GM10248 (cell line): ENCODE measurements at regions of chr3 and their contacts with region 1.

Region 1: DNA sequence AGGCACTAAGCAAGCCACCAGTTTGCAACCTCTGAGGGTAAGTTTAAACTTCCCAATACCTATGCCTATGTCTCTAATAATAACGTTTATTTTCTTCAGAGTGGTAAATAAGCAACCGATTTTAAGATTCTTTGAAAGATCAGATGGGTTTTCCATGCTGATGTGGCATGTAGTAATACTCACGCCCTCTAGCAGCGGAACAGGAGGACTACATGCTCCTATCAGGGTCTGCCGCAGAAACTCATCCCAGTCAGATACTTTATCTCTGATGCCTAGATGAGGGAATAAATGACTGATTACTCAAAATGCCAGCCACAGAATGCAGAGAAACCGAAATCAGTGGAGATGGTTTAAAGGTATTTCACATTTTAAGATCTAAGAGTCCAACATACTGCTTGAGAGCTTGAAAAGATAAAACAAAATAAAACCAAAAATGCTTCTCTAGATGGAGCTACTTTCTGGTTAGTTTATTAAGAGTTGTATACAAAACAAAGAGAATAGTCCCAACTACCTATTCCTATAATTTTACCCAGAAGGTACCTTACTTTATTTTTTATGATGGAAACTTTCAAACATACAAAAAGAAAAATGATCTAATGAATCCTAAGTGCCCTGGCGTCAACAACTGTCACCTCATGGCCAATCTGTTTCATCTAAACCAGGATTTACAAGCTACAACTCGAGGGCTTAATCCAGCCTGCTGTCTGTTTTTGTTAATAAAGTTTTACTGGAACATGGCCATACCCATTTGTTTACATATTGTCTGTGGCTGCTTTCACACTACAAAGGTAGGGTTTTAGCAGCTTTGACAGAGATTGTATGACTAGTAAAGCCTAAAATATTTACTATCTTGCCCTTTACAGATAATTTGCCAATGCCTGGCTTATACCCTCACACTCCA is 37.5 kb upstream of the STIMATE start:
- DNase-seq: peak; percentile 67
- CTCF ChIP-seq: peak; percentile 72

Region 2: GRCh38 chr3:52851348-52851747 is 83.5 kb before region 1 on chr3:
- CTCF ChIA-PET with region 1: interaction called, 13 read pairs
- POLR2A ChIA-PET with region 1: no interaction called
- DNase-seq: peak; percentile 71
- CTCF ChIP-seq: peak; percentile 65

Region 3: DNA sequence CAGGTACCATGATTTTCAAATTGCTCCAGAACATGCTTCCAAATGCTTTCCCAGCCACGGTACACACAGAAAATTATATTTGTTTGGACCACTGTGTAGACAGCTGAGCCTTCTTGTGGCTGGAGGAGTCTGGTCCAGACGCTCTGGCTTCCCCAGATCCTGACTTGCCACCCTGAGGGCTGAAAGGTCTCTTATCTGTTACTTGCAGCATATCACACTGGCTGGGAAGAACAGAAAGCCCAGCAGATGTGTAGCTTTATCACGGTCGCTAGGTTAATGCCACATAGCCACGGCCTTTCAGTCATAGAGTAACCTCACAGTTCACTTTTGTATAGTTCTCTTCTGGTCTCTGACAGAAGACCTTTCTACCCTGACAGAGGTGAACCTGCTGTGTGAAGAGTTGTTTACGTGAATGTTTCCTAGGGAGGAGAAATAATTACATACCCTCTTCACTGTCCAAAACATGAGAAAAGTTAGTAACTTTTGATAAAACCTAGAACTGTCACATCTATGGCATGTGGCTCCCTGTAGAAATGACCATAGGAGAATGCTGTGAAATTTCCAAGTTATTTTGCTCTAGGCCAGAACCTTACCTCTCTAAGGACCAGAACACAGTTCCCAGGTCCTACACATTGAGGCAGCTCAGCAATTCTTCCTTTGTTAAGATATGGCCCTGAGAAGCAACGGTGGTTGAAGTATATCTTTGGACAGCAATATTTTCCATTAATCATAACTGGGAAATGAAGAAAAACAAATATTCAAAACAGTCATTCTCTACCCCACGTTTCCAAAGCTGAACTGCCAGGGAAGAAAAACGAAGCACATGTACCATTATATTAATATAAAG is 21.8 kb before region 1 on chr3:
- CTCF ChIA-PET with region 1: interaction called, 10 read pairs
- POLR2A ChIA-PET with region 1: no interaction called
- DNase-seq: no peak
- CTCF ChIP-seq: no peak

Region 4: DNA sequence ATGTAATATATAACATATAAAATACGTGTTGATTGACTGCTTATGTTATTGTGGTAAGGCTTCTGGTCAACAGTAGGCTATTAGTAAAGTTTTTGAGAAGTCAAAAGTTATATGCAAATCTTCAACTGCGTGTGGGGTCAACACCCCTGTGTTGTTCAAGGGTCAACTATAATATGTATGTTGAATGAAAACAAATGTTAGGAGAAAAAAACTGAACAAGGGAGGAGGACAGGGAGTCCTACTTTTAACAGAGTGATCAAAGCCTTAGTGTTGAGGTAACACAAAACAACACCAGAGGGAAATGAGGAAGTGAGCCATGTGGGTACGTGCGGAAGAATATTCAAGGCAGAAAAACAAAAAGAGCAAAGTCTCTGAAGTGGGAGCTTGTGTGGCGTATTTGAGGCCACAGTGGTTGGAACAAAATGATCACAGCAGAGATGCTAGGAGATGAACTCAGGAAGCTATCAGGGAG is 48.5 kb after region 1 on chr3:
- CTCF ChIA-PET with region 1: interaction called, 11 read pairs
- POLR2A ChIA-PET with region 1: no interaction called
- DNase-seq: peak; percentile 71
- CTCF ChIP-seq: no peak